ENCODE measurements at regions of chr5 and their contacts with region 1.

Region 1: GRCh38 chr5:32489791-32490582 is 45.4 kb upstream of the ZFR start:
- DNase-seq: peak; percentile 61 to 71 (median 68)
- H3K4me3 ChIP-seq: no peak overlapping the region
- H3K4me3 Mint-ChIP-seq: no peak overlapping the region
- H3K27ac ChIP-seq: no peak overlapping the region
- H3K27ac Mint-ChIP-seq: peak overlapping the region in 1 of 7 donors; percentile 3
- H3K4me1 ChIP-seq: no peaks in the 10 kb centered on the region
- H3K4me1 Mint-ChIP-seq: peaks cover 0 to 6% (median 1%) of the 10 kb centered on the region in 4 donors
- H3K27me3 ChIP-seq: no peaks in the 10 kb centered on the region
- H3K27me3 Mint-ChIP-seq: no peaks in the 10 kb centered on the region

Region 2: GRCh38 chr5:32232441-32233219 is 257.4 kb before region 1 on chr5:
- CTCF ChIA-PET with region 1: interaction called, 10 read pairs
- POLR2A ChIA-PET with region 1: no interaction called
- intact Hi-C with region 1: no loop called
- DNase-seq: peak; percentile 65 to 69 (median 67)
- H3K4me3 ChIP-seq: no peak overlapping the region
- H3K4me3 Mint-ChIP-seq: no peak overlapping the region
- H3K27ac ChIP-seq: no peak overlapping the region
- H3K27ac Mint-ChIP-seq: peak overlapping the region in 5 of 7 donors; percentile 24 to 89 (median 73)
- H3K4me1 ChIP-seq: no peaks in the 10 kb centered on the region
- H3K4me1 Mint-ChIP-seq: peaks cover 0 to 7% (median 4%) of the 10 kb centered on the region in 4 donors
- H3K27me3 ChIP-seq: no peaks in the 10 kb centered on the region
- H3K27me3 Mint-ChIP-seq: no peaks in the 10 kb centered on the region

Region 3: GRCh38 chr5:32479096-32479495 is 10.9 kb before region 1 on chr5:
- CTCF ChIA-PET with region 1: interaction called, 12 read pairs
- POLR2A ChIA-PET with region 1: no interaction called
- intact Hi-C with region 1: no loop called
- DNase-seq: no peak
- H3K4me3 ChIP-seq: no peak overlapping the region
- H3K4me3 Mint-ChIP-seq: no peak overlapping the region
- H3K27ac ChIP-seq: no peak overlapping the region
- H3K27ac Mint-ChIP-seq: no peak overlapping the region
- H3K4me1 ChIP-seq: no peaks in the 10 kb centered on the region
- H3K4me1 Mint-ChIP-seq: no peaks in the 10 kb centered on the region
- H3K27me3 ChIP-seq: no peaks in the 10 kb centered on the region
- H3K27me3 Mint-ChIP-seq: no peaks in the 10 kb centered on the region

Region 4: GRCh38 chr5:32522429-32523143 is 32.6 kb after region 1 on chr5:
- CTCF ChIA-PET with region 1: interaction called, 12 read pairs
- POLR2A ChIA-PET with region 1: no interaction called
- intact Hi-C with region 1: no loop called
- DNase-seq: peak; percentile 20 to 71 (median 33)
- H3K4me3 ChIP-seq: no peak overlapping the region
- H3K4me3 Mint-ChIP-seq: peak overlapping the region in 3 of 8 donors; percentile 5 to 48 (median 17)
- H3K27ac ChIP-seq: no peak overlapping the region
- H3K27ac Mint-ChIP-seq: peak overlapping the region in 3 of 7 donors; percentile 22 to 92 (median 85)
- H3K4me1 ChIP-seq: peaks cover 15% of the 10 kb centered on the region
- H3K4me1 Mint-ChIP-seq: peaks cover 13 to 21% (median 16%) of the 10 kb centered on the region in 4 donors
- H3K27me3 ChIP-seq: no peaks in the 10 kb centered on the region
- H3K27me3 Mint-ChIP-seq: no peaks in the 10 kb centered on the region

Region 5: GRCh38 chr5:32578363-32578762 is 88.4 kb after region 1 on chr5:
- CTCF ChIA-PET with region 1: interaction called, 70 read pairs
- POLR2A ChIA-PET with region 1: no interaction called
- intact Hi-C with region 1: no loop called
- DNase-seq: no peak
- H3K4me3 ChIP-seq: no peak overlapping the region
- H3K4me3 Mint-ChIP-seq: no peak overlapping the region
- H3K27ac ChIP-seq: no peak overlapping the region
- H3K27ac Mint-ChIP-seq: peak overlapping the region in 1 of 7 donors; percentile 61
- H3K4me1 ChIP-seq: peaks cover 12% of the 10 kb centered on the region
- H3K4me1 Mint-ChIP-seq: peaks cover 11 to 24% (median 16%) of the 10 kb centered on the region in 4 donors
- H3K27me3 ChIP-seq: no peaks in the 10 kb centered on the region
- H3K27me3 Mint-ChIP-seq: no peaks in the 10 kb centered on the region

Region 6: GRCh38 chr5:32613050-32613672 is 123.2 kb after region 1 on chr5:
- CTCF ChIA-PET with region 1: interaction called, 108 read pairs
- POLR2A ChIA-PET with region 1: no interaction called
- intact Hi-C with region 1: loop called (anchors 1 kb)
- DNase-seq: peak; percentile 72 to 79 (median 76)
- H3K4me3 ChIP-seq: no peak overlapping the region
- H3K4me3 Mint-ChIP-seq: no peak overlapping the region
- H3K27ac ChIP-seq: no peak overlapping the region
- H3K27ac Mint-ChIP-seq: peak overlapping the region in 2 of 7 donors; percentile 7 to 65
- H3K4me1 ChIP-seq: no peaks in the 10 kb centered on the region
- H3K4me1 Mint-ChIP-seq: peaks cover 2 to 24% (median 14%) of the 10 kb centered on the region in 4 donors
- H3K27me3 ChIP-seq: no peaks in the 10 kb centered on the region
- H3K27me3 Mint-ChIP-seq: no peaks in the 10 kb centered on the region

Region 7: DNA sequence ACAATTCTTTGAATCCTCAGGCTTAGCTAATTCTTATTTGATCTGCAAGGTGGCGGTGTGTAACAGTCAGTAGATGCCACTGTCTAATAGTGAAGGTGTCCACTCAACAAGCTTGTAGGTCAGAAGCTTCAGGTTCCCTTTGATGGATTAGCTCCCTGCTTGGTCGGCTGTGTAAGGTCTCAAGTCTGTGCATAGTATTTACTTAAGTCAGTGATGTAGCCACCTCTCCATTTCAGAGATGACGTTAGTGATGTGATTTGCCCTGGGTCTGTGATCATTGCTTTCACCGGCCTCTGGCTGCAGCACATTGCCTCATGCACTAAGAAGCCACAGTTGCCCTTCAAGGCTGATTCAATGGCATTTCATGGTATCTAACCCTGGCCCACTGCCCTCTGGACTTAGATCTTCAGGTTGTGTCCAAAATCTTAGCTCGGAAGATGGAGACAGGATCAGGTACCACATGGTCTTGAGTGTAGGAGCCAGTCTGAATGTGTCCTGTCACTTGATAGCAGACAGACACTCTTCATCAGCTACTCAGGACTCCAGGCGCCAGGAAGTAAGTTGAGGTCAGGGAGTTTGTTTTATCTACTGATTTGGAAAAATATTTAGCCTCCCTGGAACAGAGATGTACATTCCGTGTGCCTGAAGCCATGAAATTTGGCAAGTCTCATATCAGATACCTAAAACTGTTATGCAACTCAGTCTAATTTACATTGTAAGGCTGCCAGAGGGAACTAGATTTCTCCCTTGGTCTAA is 138.2 kb after region 1 on chr5:
- CTCF ChIA-PET with region 1: no interaction called
- POLR2A ChIA-PET with region 1: no interaction called
- intact Hi-C with region 1: no loop called
- DNase-seq: no peak
- H3K4me3 ChIP-seq: no peak overlapping the region
- H3K4me3 Mint-ChIP-seq: no peak overlapping the region
- H3K27ac ChIP-seq: no peak overlapping the region
- H3K27ac Mint-ChIP-seq: no peak overlapping the region
- H3K4me1 ChIP-seq: no peaks in the 10 kb centered on the region
- H3K4me1 Mint-ChIP-seq: no peaks in the 10 kb centered on the region
- H3K27me3 ChIP-seq: no peaks in the 10 kb centered on the region
- H3K27me3 Mint-ChIP-seq: peaks cover 0 to 1% of the 10 kb centered on the region in 2 donors